Naive thymus-derived CD4-positive, alpha-beta T cell (primary cell): ENCODE measurements at regions of chr12 and their contacts with region 1.

Region 1: GRCh38 chr12:55915482-55915859 is 12.2 kb downstream of the PYM1 start:
- DNase-seq: no peak
- ATAC-seq: no peak
- H3K4me3 ChIP-seq: no peak overlapping the region
- H3K4me3 Mint-ChIP-seq: peak overlapping the region in 5 of 10 donors; percentile 0 to 65 (median 39)
- H3K27ac ChIP-seq: peak overlapping the region; percentile 24
- H3K27ac Mint-ChIP-seq: peak overlapping the region in 7 of 9 donors; percentile 8 to 87 (median 24)
- H3K4me1 ChIP-seq: peaks cover 0 to 21% of the 10 kb centered on the region in 2 donors
- H3K4me1 Mint-ChIP-seq: peaks cover 21 to 50% (median 41%) of the 10 kb centered on the region in 7 donors
- H3K27me3 ChIP-seq: no peaks in the 10 kb centered on the region
- H3K27me3 Mint-ChIP-seq: no peaks in the 10 kb centered on the region

Region 2: GRCh38 chr12:55861871-55862270 is 53.6 kb before region 1 on chr12:
- CTCF ChIA-PET with region 1: no interaction called
- POLR2A ChIA-PET with region 1: interaction called, 3 read pairs
- intact Hi-C with region 1: loop called in 1 of 2 experiments (anchors 2 kb)
- DNase-seq: no peak
- ATAC-seq: no peak
- H3K4me3 ChIP-seq: no peak overlapping the region
- H3K4me3 Mint-ChIP-seq: no peak overlapping the region
- H3K27ac ChIP-seq: no peak overlapping the region
- H3K27ac Mint-ChIP-seq: no peak overlapping the region
- H3K4me1 ChIP-seq: no peaks in the 10 kb centered on the region
- H3K4me1 Mint-ChIP-seq: peaks cover 0 to 2% (median 0%) of the 10 kb centered on the region in 7 donors
- H3K27me3 ChIP-seq: no peaks in the 10 kb centered on the region
- H3K27me3 Mint-ChIP-seq: peaks cover 0 to 4% (median 0%) of the 10 kb centered on the region in 5 donors

Region 3: GRCh38 chr12:55931780-55932550 is 16.5 kb after region 1 on chr12:
- CTCF ChIA-PET with region 1: interaction called, 4 read pairs
- POLR2A ChIA-PET with region 1: interaction called, 40 read pairs
- intact Hi-C with region 1: no loop called
- DNase-seq: peak in 1 of 9 donors; percentile 54
- ATAC-seq: no peak
- H3K4me3 ChIP-seq: peak overlapping the region; percentile 82
- H3K4me3 Mint-ChIP-seq: peak overlapping the region; percentile 96 to 100 (median 98)
- H3K27ac ChIP-seq: peak overlapping the region; percentile 90
- H3K27ac Mint-ChIP-seq: peak overlapping the region; percentile 96 to 100 (median 98)
- H3K4me1 ChIP-seq: peaks cover 29 to 56% of the 10 kb centered on the region in 2 donors
- H3K4me1 Mint-ChIP-seq: peaks cover 34 to 61% (median 47%) of the 10 kb centered on the region in 7 donors
- H3K27me3 ChIP-seq: no peaks in the 10 kb centered on the region
- H3K27me3 Mint-ChIP-seq: peaks cover 0 to under 1% (median 0%) of the 10 kb centered on the region in 5 donors